ENCODE measurements at regions of chr5 and their contacts with region 1.

Region 1: DNA sequence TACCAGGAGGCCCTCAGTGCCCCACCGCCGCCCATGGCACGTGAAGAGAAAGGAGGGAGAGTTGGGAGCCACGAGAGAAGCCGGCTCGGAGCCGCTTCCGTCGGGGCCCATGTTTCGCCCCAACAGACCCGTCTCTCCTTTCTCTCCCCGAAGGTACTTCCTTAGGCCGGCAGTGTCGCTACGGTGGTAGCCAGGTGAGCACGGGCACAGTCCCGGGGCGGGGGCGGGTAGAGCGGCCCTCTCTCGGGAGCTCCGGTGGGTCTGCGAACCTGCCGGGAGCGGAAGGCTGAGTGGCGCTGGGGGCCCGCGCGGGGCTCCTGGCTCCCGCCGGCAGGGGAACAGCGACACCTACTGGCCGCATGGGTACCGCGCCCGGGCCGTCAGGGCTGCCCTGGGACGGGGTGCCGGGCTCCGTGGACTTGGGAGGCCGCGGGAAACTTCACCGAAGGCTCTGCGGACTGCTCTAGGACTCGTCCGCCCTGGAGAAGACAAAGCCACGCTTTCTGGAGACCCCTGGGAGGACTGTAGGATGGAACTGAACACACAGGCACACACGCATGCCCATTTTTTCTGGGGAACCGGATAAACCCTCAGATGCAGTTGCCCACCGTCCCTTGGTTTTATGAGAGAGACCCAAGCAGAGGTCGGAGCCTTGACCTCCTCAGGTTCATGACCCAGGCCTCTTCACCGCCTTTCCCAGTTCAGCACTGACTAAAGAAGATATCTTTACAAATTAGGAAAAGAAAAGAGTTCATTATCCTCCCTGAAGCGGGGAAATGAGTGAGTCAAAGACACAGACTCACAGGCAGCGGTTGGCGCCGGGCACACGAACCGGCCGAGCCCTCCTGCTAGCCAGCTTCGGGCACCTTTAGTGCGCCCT is 202.5 kb downstream of the MEF2C start:
- ATAC-seq: peak; percentile 59 to 89 (median 68)
- H3K4me3 ChIP-seq: peak overlapping the region; percentile 41 to 97 (median 91)
- H3K27ac ChIP-seq: peak overlapping the region; percentile 8 to 66
- H3K4me1 ChIP-seq: peaks cover 0 to 9% of the 10 kb centered on the region in 2 donors

Region 2: GRCh38 chr5:87780831-87781760 is 899.4 kb before region 1 on chr5:
- in situ Hi-C with region 1: loop called (anchors 10 to 25 kb)
- ATAC-seq: peak; percentile 100
- H3K4me3 ChIP-seq: peak overlapping the region in 1 of 5 donors; percentile 20
- H3K27ac ChIP-seq: no peak overlapping the region
- H3K4me1 ChIP-seq: no peaks in the 10 kb centered on the region

Region 3: DNA sequence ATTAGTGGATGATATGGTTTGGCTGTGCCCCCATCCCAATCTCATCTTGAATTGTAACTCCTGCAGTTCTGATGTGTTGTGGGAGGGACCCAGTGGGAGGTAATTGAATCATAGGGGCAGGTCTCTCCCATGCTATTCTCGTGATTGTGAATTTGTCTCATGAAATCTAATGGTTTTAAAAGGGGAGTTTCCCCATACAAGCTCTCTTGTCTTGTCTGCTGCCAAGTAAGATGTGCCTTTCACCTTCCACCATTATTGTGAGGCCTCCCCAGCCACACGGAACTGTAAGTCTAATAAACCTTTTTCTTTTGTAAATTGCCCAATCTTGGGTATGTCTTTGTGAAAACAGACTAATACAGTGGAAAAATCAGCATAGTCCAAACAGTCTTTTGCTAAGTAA is 647.3 kb before region 1 on chr5:
- in situ Hi-C with region 1: no loop called
- ATAC-seq: no peak
- H3K4me3 ChIP-seq: no peak overlapping the region
- H3K27ac ChIP-seq: no peak overlapping the region
- H3K4me1 ChIP-seq: no peaks in the 10 kb centered on the region